ENCODE measurements at regions of chr12 and their contacts with region 1.

Region 1: DNA sequence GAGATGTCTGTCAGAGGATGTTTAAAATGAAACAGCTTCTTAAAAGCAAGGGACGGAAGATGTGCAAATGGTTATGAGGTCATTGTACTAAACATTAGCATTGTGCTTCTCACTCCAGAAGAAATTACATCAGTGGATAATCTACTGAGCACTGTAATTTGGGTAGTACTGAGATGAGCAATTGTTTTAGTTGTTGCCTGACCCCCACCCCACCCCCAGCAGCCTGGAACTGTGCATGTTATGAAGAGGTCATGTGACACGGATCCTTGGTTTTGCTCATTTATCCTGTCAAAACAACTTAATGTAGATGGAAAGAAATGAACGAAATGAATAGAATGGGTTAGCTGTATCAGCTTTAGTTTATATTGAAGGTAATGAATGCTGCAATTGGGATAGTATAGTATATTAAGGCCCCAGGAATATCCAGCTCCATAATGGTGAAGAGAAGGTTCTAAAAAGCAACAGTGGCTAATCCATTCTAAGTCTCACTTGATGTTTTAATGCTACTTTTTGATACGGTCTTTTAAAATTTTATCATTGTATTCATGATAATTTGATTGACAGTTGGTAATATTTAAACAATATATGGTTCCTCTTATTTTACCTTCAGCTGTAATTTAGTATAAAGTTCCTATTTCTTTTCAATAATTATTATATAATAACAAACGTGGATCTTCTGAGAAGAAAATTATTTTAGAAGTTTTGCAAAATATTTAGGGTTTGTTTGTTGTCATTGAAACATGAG is 58.5 kb downstream of the WNK1 start:
- DNase-seq: peak; percentile 84
- ATAC-seq: peak; percentile 95
- H3K4me3 Mint-ChIP-seq: peak overlapping the region; percentile 32
- H3K27ac Mint-ChIP-seq: peak overlapping the region; percentile 78
- H3K4me1 Mint-ChIP-seq: peaks cover 68% of the 10 kb centered on the region
- H3K27me3 Mint-ChIP-seq: no peaks in the 10 kb centered on the region

Region 2: DNA sequence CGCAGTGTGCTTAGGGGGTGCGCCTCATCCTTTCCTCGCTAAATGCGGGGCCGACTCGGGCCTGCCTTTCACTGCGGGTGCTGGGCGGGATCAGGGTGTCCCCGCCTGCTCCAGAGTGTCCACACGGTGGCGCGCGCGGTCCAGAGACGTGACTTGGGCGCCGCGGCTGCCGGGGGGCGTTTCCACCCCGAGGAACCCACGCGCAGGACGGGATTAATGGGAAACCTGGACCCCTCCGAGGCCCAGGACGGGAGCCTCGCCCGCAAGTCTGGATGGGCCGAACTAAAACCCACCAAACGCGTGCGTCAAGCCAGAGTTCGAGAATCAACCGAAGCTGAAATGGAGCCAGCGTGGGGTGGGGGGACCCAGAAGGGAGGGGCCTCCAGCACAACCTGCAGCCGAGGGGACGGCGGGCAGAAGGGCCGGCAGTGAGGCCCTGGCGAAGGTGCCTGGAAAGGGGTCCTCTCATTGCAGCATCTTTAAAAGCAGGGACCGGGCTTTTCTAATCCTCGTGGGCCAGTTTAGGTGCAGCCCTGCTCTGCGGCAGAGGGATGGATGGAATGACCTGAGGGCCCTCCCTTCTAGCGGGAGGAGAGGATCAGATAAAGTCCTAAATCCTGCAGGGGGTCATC is 240.9 kb before region 1 on chr12:
- CTCF ChIA-PET with region 1: interaction called, 42 read pairs
- POLR2A ChIA-PET with region 1: no interaction called
- intact Hi-C with region 1: loop called in 1 of 2 experiments (anchors 1 kb)
- DNase-seq: peak; percentile 94
- ATAC-seq: peak; percentile 89
- H3K4me3 Mint-ChIP-seq: peak overlapping the region; percentile 74
- H3K27ac Mint-ChIP-seq: peak overlapping the region; percentile 85
- H3K4me1 Mint-ChIP-seq: peaks cover 65% of the 10 kb centered on the region
- H3K27me3 Mint-ChIP-seq: no peaks in the 10 kb centered on the region

Region 3: GRCh38 chr12:614411-614970 is 196.4 kb before region 1 on chr12:
- CTCF ChIA-PET with region 1: interaction called, 23 read pairs
- POLR2A ChIA-PET with region 1: no interaction called
- intact Hi-C with region 1: loop called (anchors 1 kb)
- DNase-seq: peak; percentile 74
- ATAC-seq: peak; percentile 50
- H3K4me3 Mint-ChIP-seq: no peak overlapping the region
- H3K27ac Mint-ChIP-seq: no peak overlapping the region
- H3K4me1 Mint-ChIP-seq: peaks cover 37% of the 10 kb centered on the region
- H3K27me3 Mint-ChIP-seq: no peaks in the 10 kb centered on the region

Region 4: DNA sequence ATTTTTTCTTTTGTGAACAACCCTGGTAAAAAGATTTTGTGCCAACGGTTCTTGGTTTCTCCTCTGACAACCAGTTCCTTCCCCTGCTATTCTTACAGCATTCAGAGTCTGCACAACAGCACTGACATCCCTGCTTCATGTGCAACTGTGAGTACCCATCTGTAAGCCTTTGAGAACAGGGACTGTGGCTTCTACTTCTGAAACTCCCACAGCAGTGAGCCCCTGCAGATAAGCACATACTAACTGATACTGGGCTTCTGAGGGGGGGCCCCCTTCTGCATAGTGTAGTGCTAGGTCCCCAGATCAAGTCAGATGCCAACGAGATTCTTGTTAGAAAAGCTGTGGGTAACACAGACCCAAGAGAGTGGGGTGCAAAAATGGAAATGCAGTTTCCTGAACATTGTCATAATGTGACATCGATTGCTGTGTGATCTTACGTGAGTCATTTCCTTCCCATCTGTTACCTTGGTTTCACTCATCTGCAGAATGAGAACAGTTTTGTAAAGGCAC is 136.5 kb before region 1 on chr12:
- CTCF ChIA-PET with region 1: interaction called, 5 read pairs
- POLR2A ChIA-PET with region 1: no interaction called
- intact Hi-C with region 1: loop called (anchors 2 to 5 kb)
- DNase-seq: peak; percentile 90
- ATAC-seq: peak; percentile 95
- H3K4me3 Mint-ChIP-seq: peak overlapping the region; percentile 59
- H3K27ac Mint-ChIP-seq: peak overlapping the region; percentile 92
- H3K4me1 Mint-ChIP-seq: peaks cover 82% of the 10 kb centered on the region
- H3K27me3 Mint-ChIP-seq: peaks cover 2% of the 10 kb centered on the region

Region 5: GRCh38 chr12:857611-858010 is 46.8 kb after region 1 on chr12:
- CTCF ChIA-PET with region 1: interaction called, 16 read pairs
- POLR2A ChIA-PET with region 1: no interaction called
- intact Hi-C with region 1: no loop called
- DNase-seq: no peak
- ATAC-seq: no peak
- H3K4me3 Mint-ChIP-seq: no peak overlapping the region
- H3K27ac Mint-ChIP-seq: peak overlapping the region; percentile 21
- H3K4me1 Mint-ChIP-seq: peaks cover 16% of the 10 kb centered on the region
- H3K27me3 Mint-ChIP-seq: no peaks in the 10 kb centered on the region

Region 6: DNA sequence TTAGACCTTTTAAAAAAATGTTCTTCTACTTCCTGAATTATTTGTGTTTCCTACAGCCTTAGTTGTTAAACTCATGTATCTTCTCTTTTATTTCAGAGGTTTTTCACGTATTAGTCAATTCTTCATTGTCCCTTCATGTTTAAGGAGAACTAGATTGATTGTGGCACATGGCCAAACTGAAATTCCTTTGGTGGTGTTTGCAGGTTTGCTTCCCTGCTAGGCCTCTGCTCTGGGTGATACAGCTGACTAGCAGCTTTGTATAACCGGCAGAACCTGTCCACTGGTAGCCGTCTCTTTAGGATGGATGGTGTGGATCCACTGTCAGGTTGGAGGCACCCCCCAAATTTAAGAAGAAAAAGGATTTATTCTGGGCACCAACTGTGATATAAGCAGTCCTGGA is 521.5 kb after region 1 on chr12:
- CTCF ChIA-PET with region 1: no interaction called
- POLR2A ChIA-PET with region 1: no interaction called
- intact Hi-C with region 1: no loop called
- DNase-seq: no peak
- ATAC-seq: no peak
- H3K4me3 Mint-ChIP-seq: no peak overlapping the region
- H3K27ac Mint-ChIP-seq: no peak overlapping the region
- H3K4me1 Mint-ChIP-seq: no peaks in the 10 kb centered on the region
- H3K27me3 Mint-ChIP-seq: no peaks in the 10 kb centered on the region

Region 7: GRCh38 chr12:1422604-1423315 is 611.9 kb after region 1 on chr12:
- CTCF ChIA-PET with region 1: no interaction called
- POLR2A ChIA-PET with region 1: no interaction called
- intact Hi-C with region 1: no loop called
- DNase-seq: no peak
- ATAC-seq: peak; percentile 53
- H3K4me3 Mint-ChIP-seq: no peak overlapping the region
- H3K27ac Mint-ChIP-seq: no peak overlapping the region
- H3K4me1 Mint-ChIP-seq: peaks cover 11% of the 10 kb centered on the region
- H3K27me3 Mint-ChIP-seq: no peaks in the 10 kb centered on the region